ENCODE measurements at regions of chr1 and their contacts with region 1.

Region 1: GRCh38 chr1:26874896-26875295 is 11.9 kb downstream of the SFN start:
- DNase-seq: no peak
- H3K4me3 Mint-ChIP-seq: no peak overlapping the region
- H3K27ac Mint-ChIP-seq: peak overlapping the region; percentile 40
- H3K4me1 Mint-ChIP-seq: no peaks in the 10 kb centered on the region
- H3K27me3 Mint-ChIP-seq: no peaks in the 10 kb centered on the region
- CTCF ChIP-seq: no peak

Region 2: DNA sequence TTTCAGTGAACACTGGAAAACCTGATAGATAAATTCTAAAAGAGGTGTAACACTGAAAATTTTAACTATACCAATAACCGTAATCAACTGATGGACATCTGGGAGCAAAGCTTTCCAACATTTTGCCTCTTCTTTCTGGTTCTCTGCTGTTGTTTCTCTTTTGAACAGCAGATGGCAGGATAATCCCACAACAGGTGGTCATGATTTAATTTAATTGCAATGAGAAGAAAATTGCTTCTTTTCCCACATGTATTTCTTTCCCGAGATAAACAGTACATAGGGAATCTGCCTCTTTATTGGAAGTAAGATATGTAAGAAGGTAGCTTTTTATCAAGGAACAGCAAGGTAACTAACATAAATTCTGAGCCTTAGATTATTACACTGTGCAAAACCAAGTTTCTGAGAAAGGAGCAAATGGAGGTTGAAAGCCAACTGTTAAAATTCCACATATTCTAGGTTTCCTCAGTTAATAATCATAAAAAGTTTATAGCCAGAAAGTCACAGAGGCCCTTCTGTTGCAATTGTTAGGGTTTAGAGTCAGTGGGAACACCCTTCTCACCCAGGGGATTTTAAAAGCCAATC is 272.4 kb before region 1 on chr1:
- CTCF ChIA-PET with region 1: interaction called, 4 read pairs
- POLR2A ChIA-PET with region 1: no interaction called
- intact Hi-C with region 1: loop called (anchors 1 kb)
- DNase-seq: peak; percentile 77
- H3K4me3 Mint-ChIP-seq: no peak overlapping the region
- H3K27ac Mint-ChIP-seq: no peak overlapping the region
- H3K4me1 Mint-ChIP-seq: no peaks in the 10 kb centered on the region
- H3K27me3 Mint-ChIP-seq: peaks cover 28% of the 10 kb centered on the region
- CTCF ChIP-seq: peak; percentile 77

Region 3: GRCh38 chr1:26754086-26754874 is 120.6 kb before region 1 on chr1:
- CTCF ChIA-PET with region 1: no interaction called
- POLR2A ChIA-PET with region 1: no interaction called
- intact Hi-C with region 1: no loop called
- DNase-seq: no peak
- H3K4me3 Mint-ChIP-seq: no peak overlapping the region
- H3K27ac Mint-ChIP-seq: no peak overlapping the region
- H3K4me1 Mint-ChIP-seq: peaks cover 5% of the 10 kb centered on the region
- H3K27me3 Mint-ChIP-seq: no peaks in the 10 kb centered on the region
- CTCF ChIP-seq: no peak

Region 4: GRCh38 chr1:26853156-26853555 is 21.7 kb before region 1 on chr1:
- CTCF ChIA-PET with region 1: interaction called, 13 read pairs
- POLR2A ChIA-PET with region 1: interaction called, 18 read pairs
- intact Hi-C with region 1: loop called (anchors 1 kb)
- DNase-seq: peak; percentile 94
- H3K4me3 Mint-ChIP-seq: no peak overlapping the region
- H3K27ac Mint-ChIP-seq: no peak overlapping the region
- H3K4me1 Mint-ChIP-seq: peaks cover 30% of the 10 kb centered on the region
- H3K27me3 Mint-ChIP-seq: no peaks in the 10 kb centered on the region
- CTCF ChIP-seq: peak; percentile 81

Region 5: GRCh38 chr1:26858160-26858559 is 16.7 kb before region 1 on chr1:
- CTCF ChIA-PET with region 1: interaction called, 28 read pairs
- POLR2A ChIA-PET with region 1: interaction called, 18 read pairs
- intact Hi-C with region 1: loop called (anchors 1 kb)
- DNase-seq: peak; percentile 54
- H3K4me3 Mint-ChIP-seq: no peak overlapping the region
- H3K27ac Mint-ChIP-seq: peak overlapping the region; percentile 81
- H3K4me1 Mint-ChIP-seq: peaks cover 38% of the 10 kb centered on the region
- H3K27me3 Mint-ChIP-seq: no peaks in the 10 kb centered on the region
- CTCF ChIP-seq: no peak

Region 6: DNA sequence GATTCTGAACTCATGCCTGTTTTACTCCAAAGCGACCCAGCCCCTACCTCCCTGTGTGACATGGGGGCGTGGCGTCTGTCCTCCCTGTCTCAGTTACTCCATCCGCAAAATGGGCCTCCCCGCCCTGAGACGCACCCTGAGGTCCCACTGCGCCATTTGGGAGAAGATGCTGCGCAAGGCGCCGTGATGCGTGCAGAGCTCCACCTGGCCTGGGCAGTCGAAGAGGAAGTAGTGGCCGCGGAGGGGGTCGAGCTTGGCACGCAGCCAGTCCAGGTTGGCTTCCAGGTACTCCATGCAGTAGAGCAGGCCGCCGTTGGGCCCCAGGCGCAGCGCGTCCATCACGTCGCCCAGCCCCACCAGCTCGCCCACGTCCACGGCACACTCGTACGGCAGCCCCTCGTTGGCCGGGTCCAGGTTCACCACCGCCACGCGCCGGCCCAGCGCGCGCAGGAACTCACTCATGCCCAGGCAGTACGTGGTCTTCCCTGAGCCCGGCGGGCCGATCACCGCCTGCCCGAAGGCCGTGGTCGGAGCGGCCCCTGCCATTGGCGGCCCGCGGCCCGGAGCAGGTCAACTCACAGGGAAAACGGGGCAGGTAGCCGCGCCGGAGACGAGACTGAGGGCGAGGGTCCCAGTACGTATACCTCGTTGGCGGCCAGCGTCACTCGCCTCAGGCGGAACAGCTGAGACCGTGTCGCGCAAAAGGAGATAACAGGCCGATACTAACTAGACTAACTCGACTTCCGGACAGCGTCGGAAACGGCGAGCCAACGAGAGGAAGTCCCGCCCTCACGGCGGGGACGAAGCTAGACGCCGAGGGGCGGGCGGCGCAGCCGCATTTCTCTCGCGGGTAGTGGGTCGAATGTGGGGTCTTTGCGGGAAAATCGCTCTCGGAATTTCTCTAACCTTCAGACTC is 14.9 kb after region 1 on chr1 and contains the start of gene GPN2:
- CTCF ChIA-PET with region 1: interaction called, 19 read pairs
- POLR2A ChIA-PET with region 1: interaction called, 7 read pairs
- intact Hi-C with region 1: no loop called
- DNase-seq: peak; percentile 75
- H3K4me3 Mint-ChIP-seq: peak within 1 kb of the TSS; percentile 91
- H3K27ac Mint-ChIP-seq: peak within 1 kb of the TSS; percentile 93
- H3K4me1 Mint-ChIP-seq: peaks cover 23% of the 10 kb centered on the region
- H3K27me3 Mint-ChIP-seq: no peaks in the 10 kb centered on the region
- CTCF ChIP-seq: no peak
- total RNA-seq, gene GPN2: 38.9 and 39.7 TPM in 2 replicates